ENCODE measurements at regions of chr9 and their contacts with region 1.

Region 1: DNA sequence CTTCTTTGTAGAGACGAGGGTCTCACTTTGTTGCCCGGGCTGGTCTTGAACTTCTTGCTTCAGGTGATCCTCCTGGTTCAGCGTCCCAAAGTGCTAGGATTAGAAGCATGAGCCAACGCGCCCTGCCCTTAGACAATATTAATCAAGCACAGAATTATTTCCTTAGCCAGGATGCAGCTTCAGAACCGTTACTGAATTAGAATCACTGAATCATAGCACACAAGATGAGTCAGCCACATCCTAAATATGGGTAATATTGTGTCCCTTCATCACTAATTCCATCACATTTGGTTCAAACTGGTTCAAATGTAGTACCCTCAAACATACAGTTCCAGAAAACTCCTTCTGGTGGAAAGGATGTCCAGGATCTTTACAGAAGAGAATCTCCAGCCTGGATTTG is 82.7 kb downstream of the BNC2 start:
- DNase-seq: no peak
- ATAC-seq: no peak
- H3K4me3 ChIP-seq: no peak overlapping the region
- H3K27ac ChIP-seq: no peak overlapping the region
- H3K4me1 ChIP-seq: no peaks in the 10 kb centered on the region
- H3K27me3 ChIP-seq: no peaks in the 10 kb centered on the region
- CTCF ChIP-seq: no peak
- EP300 ChIP-seq: no peak
- POLR2A ChIP-seq: no peak
- RAD21 ChIP-seq: no peak

Region 2: DNA sequence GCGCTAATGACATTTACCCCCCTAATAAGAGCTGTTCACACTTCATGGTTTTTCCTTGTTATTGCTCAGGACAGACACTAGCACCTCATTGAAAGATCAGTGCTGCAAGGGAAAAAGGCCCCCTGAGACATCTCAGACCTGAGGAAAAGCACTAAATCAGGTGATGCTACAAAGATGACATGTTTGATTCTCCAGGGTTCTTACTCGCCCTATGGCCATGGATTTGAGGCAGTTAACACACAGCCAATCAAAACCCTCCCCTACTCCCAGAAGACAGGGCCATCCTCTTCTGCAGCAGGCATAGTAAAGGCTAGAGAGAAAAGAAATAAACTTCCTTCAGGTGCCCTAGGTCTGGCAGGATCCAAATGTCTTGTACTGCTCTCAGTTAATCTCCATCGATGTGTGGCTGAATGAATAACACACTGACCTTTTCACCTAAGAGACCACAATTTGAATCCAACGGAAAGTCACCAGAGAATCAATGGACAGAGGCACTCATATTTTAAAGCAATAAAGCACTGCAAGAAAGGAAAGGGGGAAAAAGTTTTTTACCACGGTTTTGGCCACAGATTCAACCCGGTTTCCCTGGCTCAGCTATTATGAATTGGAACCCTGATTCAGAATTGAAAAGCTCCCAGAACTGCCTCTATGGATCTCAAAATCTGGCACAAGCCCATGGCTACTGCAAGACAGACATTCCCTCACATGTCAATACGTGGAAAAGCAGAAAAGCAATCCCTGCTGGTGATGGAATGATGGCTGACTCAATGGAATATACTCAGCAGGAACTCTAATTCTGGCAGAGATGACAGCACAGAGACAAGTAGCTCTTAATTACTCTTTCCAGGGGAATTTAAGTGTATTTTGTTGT is 246.7 kb before region 1 on chr9:
- CTCF ChIA-PET with region 1: no interaction called
- POLR2A ChIA-PET with region 1: no interaction called
- RAD21 ChIA-PET with region 1: no interaction called
- SMC1A ChIA-PET with region 1: no interaction called
- in situ Hi-C with region 1: no loop called
- intact Hi-C with region 1: no loop called
- DNase-seq: no peak
- ATAC-seq: no peak
- H3K4me3 ChIP-seq: no peak overlapping the region
- H3K27ac ChIP-seq: no peak overlapping the region
- H3K4me1 ChIP-seq: no peaks in the 10 kb centered on the region
- H3K27me3 ChIP-seq: no peaks in the 10 kb centered on the region
- CTCF ChIP-seq: no peak
- EP300 ChIP-seq: no peak
- POLR2A ChIP-seq: no peak
- RAD21 ChIP-seq: no peak

Region 3: GRCh38 chr9:16834817-16835216 is 47.1 kb after region 1 on chr9:
- CTCF ChIA-PET with region 1: no interaction called
- POLR2A ChIA-PET with region 1: no interaction called
- RAD21 ChIA-PET with region 1: no interaction called
- SMC1A ChIA-PET with region 1: no interaction called
- in situ Hi-C with region 1: loop called (anchors 5 kb)
- intact Hi-C with region 1: no loop called
- DNase-seq: no peak
- ATAC-seq: no peak
- H3K4me3 ChIP-seq: no peak overlapping the region
- H3K27ac ChIP-seq: no peak overlapping the region
- H3K4me1 ChIP-seq: no peaks in the 10 kb centered on the region
- H3K27me3 ChIP-seq: no peaks in the 10 kb centered on the region
- CTCF ChIP-seq: no peak
- EP300 ChIP-seq: no peak
- POLR2A ChIP-seq: no peak
- RAD21 ChIP-seq: no peak